Activated T-helper 2 cell treated with anti-CD3 and anti-CD28 coated beads, Interferon-gamma antibody, Interleukin-2, Interleukin-4, amounts not matched to agents 10 μg/mL and 5 μg/mL and 100 μg/mL, durations not matched to agents 14 hours and 24 hours and 36 hours (primary cell): ENCODE measurements at regions of chr2 and their contacts with region 1.

Region 1: DNA sequence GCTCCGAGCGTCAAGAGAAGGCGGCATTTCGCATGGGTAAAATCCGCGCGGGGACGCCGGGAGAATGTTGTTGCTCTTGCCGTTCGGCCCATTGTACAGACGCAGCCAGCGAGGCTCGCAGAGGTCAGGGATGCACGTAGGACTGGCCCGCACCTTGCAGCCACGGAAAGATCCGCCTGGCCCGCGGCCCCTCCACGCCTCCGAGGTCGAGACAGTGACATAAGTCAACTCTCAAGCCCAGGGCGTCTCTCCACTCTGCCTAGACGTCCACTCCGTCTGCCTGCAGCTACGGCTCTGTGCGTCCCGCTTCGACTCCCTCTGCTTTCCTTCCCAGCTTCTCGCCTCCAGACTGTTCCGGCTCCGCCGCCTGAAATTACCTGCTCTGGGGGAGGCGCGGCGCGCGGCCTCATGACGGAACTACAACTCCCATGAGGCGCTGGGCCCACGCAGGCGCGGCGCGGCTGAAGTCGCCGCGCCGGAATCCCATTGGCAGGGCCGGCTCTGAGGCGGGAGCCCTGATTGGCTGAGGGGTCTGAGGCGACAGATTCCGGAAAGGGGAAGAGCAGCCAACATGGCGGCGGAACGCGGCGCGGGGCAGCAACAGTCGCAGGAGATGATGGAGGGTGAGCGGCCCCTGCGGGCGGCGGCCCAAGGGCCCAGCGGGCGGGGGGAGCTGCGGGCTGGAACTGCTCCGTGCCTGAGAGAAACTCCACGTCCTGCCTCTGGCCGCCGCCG is at the start of gene PPP1R7:
- DNase-seq: peak; percentile 91
- H3K4me3 Mint-ChIP-seq: peak within 1 kb of the TSS; percentile 96
- H3K27ac Mint-ChIP-seq: peak within 1 kb of the TSS; percentile 90
- H3K4me1 Mint-ChIP-seq: peaks cover 38% of the 10 kb centered on the region
- H3K27me3 Mint-ChIP-seq: no peaks in the 10 kb centered on the region
- total RNA-seq, gene PPP1R7: 101 and 106 TPM in 2 replicates

Region 2: GRCh38 chr2:240586198-240586918 is 563.7 kb before region 1 on chr2 and contains the start of gene CAPN10:
- intact Hi-C with region 1: loop called (anchors 2 kb)
- DNase-seq: peak; percentile 97
- H3K4me3 Mint-ChIP-seq: peak within 1 kb of the TSS; percentile 97
- H3K27ac Mint-ChIP-seq: peak within 1 kb of the TSS; percentile 91
- H3K4me1 Mint-ChIP-seq: peaks cover 27% of the 10 kb centered on the region
- H3K27me3 Mint-ChIP-seq: no peaks in the 10 kb centered on the region
- total RNA-seq, gene CAPN10: 49.6 and 51.1 TPM in 2 replicates

Region 3: GRCh38 chr2:240851078-240851991 is 298.8 kb before region 1 on chr2:
- intact Hi-C with region 1: loop called (anchors 5 kb)
- DNase-seq: peak; percentile 68
- H3K4me3 Mint-ChIP-seq: no peak overlapping the region
- H3K27ac Mint-ChIP-seq: no peak overlapping the region
- H3K4me1 Mint-ChIP-seq: no peaks in the 10 kb centered on the region
- H3K27me3 Mint-ChIP-seq: no peaks in the 10 kb centered on the region

Region 4: GRCh38 chr2:241102239-241102803 is 47.8 kb before region 1 on chr2 and contains the start of gene MTERF4:
- intact Hi-C with region 1: loop called (anchors 1 kb)
- DNase-seq: peak; percentile 85
- H3K4me3 Mint-ChIP-seq: peak within 1 kb of the TSS; percentile 94
- H3K27ac Mint-ChIP-seq: peak within 1 kb of the TSS; percentile 97
- H3K4me1 Mint-ChIP-seq: peaks cover 23% of the 10 kb centered on the region
- H3K27me3 Mint-ChIP-seq: no peaks in the 10 kb centered on the region
- total RNA-seq, gene MTERF4: 34.4 and 35.4 TPM in 2 replicates

Region 5: GRCh38 chr2:241637000-241637791 is 487.1 kb after region 1 on chr2 and contains the starts of genes ATG4B and THAP4:
- intact Hi-C with region 1: loop called (anchors 10 kb)
- DNase-seq: peak; percentile 79
- H3K4me3 Mint-ChIP-seq: peak within 1 kb of the TSS; percentile 94
- H3K27ac Mint-ChIP-seq: peak within 1 kb of the TSS; percentile 92
- H3K4me1 Mint-ChIP-seq: peaks cover 42% of the 10 kb centered on the region
- H3K27me3 Mint-ChIP-seq: no peaks in the 10 kb centered on the region
- total RNA-seq, gene ATG4B: 117 TPM in 2 replicates
- total RNA-seq, gene THAP4: 48.7 and 53.3 TPM in 2 replicates

Region 6: DNA sequence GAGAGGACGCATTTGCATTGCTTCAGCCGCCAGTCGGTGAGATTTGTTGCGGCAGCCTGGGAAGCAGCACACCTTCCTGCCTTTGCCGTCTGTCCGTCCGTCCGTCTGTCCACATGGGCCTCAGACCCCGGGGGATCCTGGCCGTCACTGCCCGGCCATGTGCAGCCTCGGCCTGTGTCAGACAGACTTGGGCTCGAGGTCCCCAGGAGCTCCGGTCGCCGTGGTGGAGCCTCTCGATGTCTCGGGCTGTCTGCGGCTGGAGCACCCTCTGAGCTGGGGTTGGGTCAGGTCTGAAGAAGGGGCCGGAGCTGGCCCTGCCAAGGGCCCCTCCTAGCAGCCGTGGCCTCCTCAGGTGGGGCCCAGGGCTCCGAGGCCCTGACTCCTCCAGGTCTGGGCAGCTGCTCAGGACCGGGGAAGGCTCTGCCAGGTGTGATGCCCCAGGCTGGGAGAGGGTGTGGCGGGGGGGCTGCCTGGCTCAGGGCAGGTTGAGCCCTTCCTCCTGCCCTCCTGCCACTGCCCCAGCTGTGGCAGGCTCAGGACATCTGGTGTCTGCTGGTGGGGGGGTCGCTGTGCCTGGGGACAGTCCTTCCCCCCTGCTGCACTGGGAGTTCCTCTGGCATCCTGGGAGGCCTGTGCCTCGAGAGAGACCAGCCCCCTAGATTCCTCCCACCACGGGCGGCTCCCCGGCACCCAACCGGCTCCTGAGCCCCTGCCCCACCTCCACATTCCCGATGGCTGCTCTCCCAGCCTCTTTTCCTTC is 670.7 kb after region 1 on chr2:
- intact Hi-C with region 1: no loop called
- DNase-seq: peak; percentile 6
- H3K4me3 Mint-ChIP-seq: no peak overlapping the region
- H3K27ac Mint-ChIP-seq: no peak overlapping the region
- H3K4me1 Mint-ChIP-seq: peaks cover 8% of the 10 kb centered on the region
- H3K27me3 Mint-ChIP-seq: peaks cover 5% of the 10 kb centered on the region